ENCODE measurements at regions of chr17 and their contacts with region 1.

Region 1: GRCh38 chr17:71084219-71084618 is 914.9 kb downstream of the KCNJ2 start:
- DNase-seq: peak; percentile 32
- H3K4me3 ChIP-seq: no peak overlapping the region
- H3K27ac ChIP-seq: no peak overlapping the region
- H3K4me1 ChIP-seq: no peaks in the 10 kb centered on the region
- CTCF ChIP-seq: peak; percentile 75

Region 2: DNA sequence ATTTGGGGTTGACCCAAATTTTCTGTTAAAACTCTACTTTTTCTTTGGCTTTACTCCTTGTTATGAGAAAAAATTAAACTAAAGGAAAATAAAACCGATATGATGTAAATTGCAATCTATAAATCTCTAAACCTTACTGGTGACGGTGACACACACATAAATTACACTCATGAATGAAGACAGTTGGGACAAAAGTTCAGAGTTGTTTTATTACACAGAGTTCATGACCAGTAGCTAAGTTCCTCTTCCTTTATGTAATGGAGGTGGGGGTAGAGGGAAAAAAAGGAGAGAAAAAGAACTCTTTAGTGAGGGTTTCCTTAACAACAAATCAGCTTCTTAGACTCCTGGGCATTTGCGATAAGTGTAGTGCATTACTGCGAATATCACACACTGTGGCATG is 694.2 kb before region 1 on chr17:
- CTCF ChIA-PET with region 1: no interaction called
- POLR2A ChIA-PET with region 1: no interaction called
- intact Hi-C with region 1: no loop called
- DNase-seq: no peak
- H3K4me3 ChIP-seq: no peak overlapping the region
- H3K27ac ChIP-seq: no peak overlapping the region
- H3K4me1 ChIP-seq: no peaks in the 10 kb centered on the region
- CTCF ChIP-seq: no peak

Region 3: GRCh38 chr17:70636517-70637133 is 447.6 kb before region 1 on chr17:
- CTCF ChIA-PET with region 1: no interaction called
- POLR2A ChIA-PET with region 1: no interaction called
- intact Hi-C with region 1: loop called (anchors 5 kb)
- DNase-seq: peak; percentile 48
- H3K4me3 ChIP-seq: no peak overlapping the region
- H3K27ac ChIP-seq: no peak overlapping the region
- H3K4me1 ChIP-seq: no peaks in the 10 kb centered on the region
- CTCF ChIP-seq: peak; percentile 93

Region 4: GRCh38 chr17:70767102-70767701 is 317.0 kb before region 1 on chr17:
- CTCF ChIA-PET with region 1: no interaction called
- POLR2A ChIA-PET with region 1: no interaction called
- intact Hi-C with region 1: loop called (anchors 1 kb)
- DNase-seq: peak; percentile 43
- H3K4me3 ChIP-seq: no peak overlapping the region
- H3K27ac ChIP-seq: no peak overlapping the region
- H3K4me1 ChIP-seq: no peaks in the 10 kb centered on the region
- CTCF ChIP-seq: peak; percentile 96

Region 5: GRCh38 chr17:71099003-71099714 is 14.9 kb after region 1 on chr17:
- CTCF ChIA-PET with region 1: no interaction called
- POLR2A ChIA-PET with region 1: no interaction called
- intact Hi-C with region 1: no loop called
- DNase-seq: no peak
- H3K4me3 ChIP-seq: no peak overlapping the region
- H3K27ac ChIP-seq: no peak overlapping the region
- H3K4me1 ChIP-seq: no peaks in the 10 kb centered on the region
- CTCF ChIP-seq: no peak

Region 6: DNA sequence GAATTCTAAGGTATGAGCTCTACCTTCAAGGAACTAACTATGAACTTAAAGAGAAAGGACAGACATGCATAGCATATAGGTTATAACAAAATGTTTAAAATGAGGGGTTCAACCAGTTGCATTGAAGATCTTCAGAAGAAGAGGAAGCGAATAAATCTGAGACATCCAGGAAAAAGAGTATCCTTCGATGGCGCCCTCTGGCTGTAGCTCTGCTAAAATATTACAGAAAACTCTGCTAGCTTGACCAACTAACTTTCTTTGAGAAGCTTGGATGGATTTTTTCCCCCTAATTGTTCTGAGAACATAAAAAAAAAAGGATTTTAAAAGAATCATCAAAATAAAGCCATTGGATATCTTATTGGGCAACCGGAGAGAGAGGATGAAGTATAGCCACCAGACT is 376.7 kb after region 1 on chr17:
- CTCF ChIA-PET with region 1: no interaction called
- POLR2A ChIA-PET with region 1: no interaction called
- intact Hi-C with region 1: loop called (anchors 10 kb)
- DNase-seq: peak; percentile 60
- H3K4me3 ChIP-seq: no peak overlapping the region
- H3K27ac ChIP-seq: no peak overlapping the region
- H3K4me1 ChIP-seq: no peaks in the 10 kb centered on the region
- CTCF ChIP-seq: peak; percentile 95

Region 7: DNA sequence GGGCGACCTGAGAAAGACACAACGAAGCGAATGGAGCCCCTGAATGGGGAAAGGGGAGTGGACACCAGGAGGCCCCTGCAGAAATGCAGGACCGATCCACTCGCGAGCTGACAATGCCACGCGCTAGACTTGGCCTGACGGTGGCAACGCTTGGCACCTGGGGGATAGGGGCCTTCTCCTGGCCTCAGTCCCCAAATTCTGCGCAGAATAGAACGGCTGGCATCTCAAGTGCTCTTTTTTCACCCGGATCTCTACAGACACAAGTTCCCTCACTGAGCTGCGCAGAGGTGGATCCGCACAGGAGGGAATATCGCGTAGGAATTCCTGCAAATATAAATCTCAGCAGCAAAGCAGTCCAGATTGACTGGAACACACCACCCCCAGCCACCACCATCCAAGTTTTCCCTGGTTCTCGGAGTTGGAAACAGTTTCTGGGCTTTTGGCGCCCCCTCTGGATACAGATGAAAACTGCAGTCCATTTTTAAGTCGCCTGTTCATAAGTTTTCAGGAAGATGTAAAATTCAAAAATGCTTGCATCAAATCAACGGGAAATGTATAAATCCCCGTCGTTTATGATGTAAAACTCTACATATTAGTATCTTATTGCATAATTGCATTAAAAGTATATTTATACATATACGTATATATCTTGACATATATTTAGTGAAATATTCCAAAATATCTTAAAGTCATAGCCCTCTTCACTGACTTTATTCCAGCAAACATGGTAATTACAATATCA is 1034.3 kb after region 1 on chr17:
- CTCF ChIA-PET with region 1: no interaction called
- POLR2A ChIA-PET with region 1: no interaction called
- intact Hi-C with region 1: loop called (anchors 5 kb)
- DNase-seq: peak; percentile 54
- H3K4me3 ChIP-seq: no peak overlapping the region
- H3K27ac ChIP-seq: no peak overlapping the region
- H3K4me1 ChIP-seq: no peaks in the 10 kb centered on the region
- CTCF ChIP-seq: peak; percentile 100